ENCODE measurements at regions of chr4 and their contacts with region 1.

Region 1: DNA sequence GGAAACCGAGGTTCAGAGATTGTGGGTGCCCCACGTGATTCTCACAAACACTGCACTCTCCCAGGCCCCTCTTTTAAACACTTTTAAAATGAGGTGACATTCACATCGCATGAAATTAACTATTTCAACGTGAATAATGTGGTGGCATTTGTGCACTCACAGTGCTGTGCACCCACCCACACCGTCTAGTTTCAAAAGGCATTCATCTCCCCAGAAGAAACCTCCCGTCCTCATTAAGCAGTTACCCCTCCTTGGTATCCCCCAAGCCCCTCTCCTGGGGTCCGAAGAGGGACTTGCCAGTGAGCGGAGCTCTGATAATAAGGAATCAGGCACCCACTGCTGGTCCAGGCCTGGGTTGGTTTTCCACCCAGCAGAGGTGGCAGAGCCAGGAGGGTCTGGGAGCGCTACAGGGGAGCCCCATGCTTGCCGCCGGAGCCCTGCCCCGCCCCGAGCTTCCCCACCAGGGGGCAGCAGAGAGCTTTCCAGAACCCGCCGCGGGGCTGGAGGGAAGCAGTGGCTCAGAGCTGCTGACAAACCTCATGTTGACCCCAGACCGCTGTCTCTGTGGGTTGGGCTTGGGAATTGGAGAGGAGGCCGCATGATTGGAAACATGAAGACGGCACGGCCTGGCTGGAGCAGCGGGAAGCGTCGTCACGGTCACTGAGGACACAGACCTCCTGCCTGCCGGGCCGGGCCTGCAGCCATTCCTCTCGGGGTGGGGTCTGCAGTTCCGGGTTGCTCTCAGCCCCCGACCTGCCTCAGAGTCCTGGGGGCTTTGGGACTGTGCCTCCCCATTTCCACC is 27.5 kb upstream of the HTRA3 start:
- DNase-seq: peak; percentile 66 to 82 (median 69)
- H3K4me3 ChIP-seq: no peak overlapping the region
- H3K4me3 Mint-ChIP-seq: peak overlapping the region in 1 of 8 donors; percentile 13
- H3K27ac ChIP-seq: no peak overlapping the region
- H3K27ac Mint-ChIP-seq: peak overlapping the region in 6 of 7 donors; percentile 46 to 88 (median 81)
- H3K4me1 ChIP-seq: peaks cover 14% of the 10 kb centered on the region
- H3K4me1 Mint-ChIP-seq: peaks cover 5 to 10% (median 6%) of the 10 kb centered on the region in 4 donors
- H3K27me3 ChIP-seq: no peaks in the 10 kb centered on the region
- H3K27me3 Mint-ChIP-seq: no peaks in the 10 kb centered on the region

Region 2: DNA sequence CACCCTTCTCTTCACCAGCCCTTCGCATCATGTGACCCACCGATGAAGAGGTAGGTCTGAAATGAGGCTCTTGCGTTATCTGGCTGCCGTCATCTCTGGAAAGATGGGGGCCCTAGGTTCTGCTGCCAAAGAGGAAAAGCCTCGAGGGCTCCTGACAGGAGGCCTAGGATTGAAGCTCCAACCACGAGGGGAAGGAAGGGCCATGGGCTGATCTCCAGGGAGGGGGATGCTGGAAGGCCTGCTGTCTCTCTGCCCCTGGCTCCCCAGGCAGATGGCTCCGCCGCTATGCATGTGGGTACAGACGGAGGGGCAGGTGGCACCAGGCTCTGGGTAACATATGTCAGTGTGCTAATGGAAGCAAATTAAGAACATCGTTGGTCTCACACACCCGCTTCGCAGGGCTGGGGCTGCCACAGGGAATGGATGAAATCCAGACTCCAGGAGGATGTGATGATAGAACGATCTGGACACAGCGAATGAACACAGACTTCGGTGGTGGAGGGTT is 347.4 kb before region 1 on chr4:
- CTCF ChIA-PET with region 1: no interaction called
- POLR2A ChIA-PET with region 1: no interaction called
- intact Hi-C with region 1: no loop called
- DNase-seq: no peak
- H3K4me3 ChIP-seq: no peak overlapping the region
- H3K4me3 Mint-ChIP-seq: no peak overlapping the region
- H3K27ac ChIP-seq: no peak overlapping the region
- H3K27ac Mint-ChIP-seq: peak overlapping the region in 2 of 7 donors; percentile 24 to 64
- H3K4me1 ChIP-seq: no peaks in the 10 kb centered on the region
- H3K4me1 Mint-ChIP-seq: peaks cover 15 to 51% (median 23%) of the 10 kb centered on the region in 4 donors
- H3K27me3 ChIP-seq: no peaks in the 10 kb centered on the region
- H3K27me3 Mint-ChIP-seq: no peaks in the 10 kb centered on the region

Region 3: GRCh38 chr4:7973545-7973981 is 268.5 kb before region 1 on chr4:
- CTCF ChIA-PET with region 1: no interaction called
- POLR2A ChIA-PET with region 1: no interaction called
- intact Hi-C with region 1: no loop called
- DNase-seq: no peak
- H3K4me3 ChIP-seq: no peak overlapping the region
- H3K4me3 Mint-ChIP-seq: peak overlapping the region in 4 of 8 donors; percentile 21 to 38 (median 32)
- H3K27ac ChIP-seq: no peak overlapping the region
- H3K27ac Mint-ChIP-seq: peak overlapping the region; percentile 67 to 97 (median 88)
- H3K4me1 ChIP-seq: peaks cover 48% of the 10 kb centered on the region
- H3K4me1 Mint-ChIP-seq: peaks cover 27 to 56% (median 44%) of the 10 kb centered on the region in 4 donors
- H3K27me3 ChIP-seq: no peaks in the 10 kb centered on the region
- H3K27me3 Mint-ChIP-seq: no peaks in the 10 kb centered on the region

Region 4: GRCh38 chr4:8221476-8221875 is 20.6 kb before region 1 on chr4:
- CTCF ChIA-PET with region 1: interaction called, 10 read pairs
- POLR2A ChIA-PET with region 1: no interaction called
- intact Hi-C with region 1: no loop called
- DNase-seq: peak; percentile 71 to 80 (median 77)
- H3K4me3 ChIP-seq: no peak overlapping the region
- H3K4me3 Mint-ChIP-seq: peak overlapping the region in 7 of 8 donors; percentile 1 to 57 (median 20)
- H3K27ac ChIP-seq: peak overlapping the region; percentile 33
- H3K27ac Mint-ChIP-seq: peak overlapping the region; percentile 80 to 97 (median 92)
- H3K4me1 ChIP-seq: peaks cover 43% of the 10 kb centered on the region
- H3K4me1 Mint-ChIP-seq: peaks cover 29 to 52% (median 40%) of the 10 kb centered on the region in 4 donors
- H3K27me3 ChIP-seq: no peaks in the 10 kb centered on the region
- H3K27me3 Mint-ChIP-seq: no peaks in the 10 kb centered on the region

Region 5: GRCh38 chr4:8403173-8403753 is 161.2 kb after region 1 on chr4:
- CTCF ChIA-PET with region 1: interaction called, 8 read pairs
- POLR2A ChIA-PET with region 1: no interaction called
- intact Hi-C with region 1: loop called (anchors 2 kb)
- DNase-seq: peak in 4 of 5 donors; percentile 24 to 42 (median 27)
- H3K4me3 ChIP-seq: no peak overlapping the region
- H3K4me3 Mint-ChIP-seq: no peak overlapping the region
- H3K27ac ChIP-seq: no peak overlapping the region
- H3K27ac Mint-ChIP-seq: peak overlapping the region in 1 of 7 donors; percentile 15
- H3K4me1 ChIP-seq: no peaks in the 10 kb centered on the region
- H3K4me1 Mint-ChIP-seq: no peaks in the 10 kb centered on the region
- H3K27me3 ChIP-seq: no peaks in the 10 kb centered on the region
- H3K27me3 Mint-ChIP-seq: no peaks in the 10 kb centered on the region

Region 6: GRCh38 chr4:8917868-8918783 is 676.0 kb after region 1 on chr4:
- CTCF ChIA-PET with region 1: no interaction called
- POLR2A ChIA-PET with region 1: no interaction called
- intact Hi-C with region 1: loop called (anchors 5 kb)
- DNase-seq: peak in 4 of 5 donors; percentile 26 to 50 (median 46)
- H3K4me3 ChIP-seq: no peak overlapping the region
- H3K4me3 Mint-ChIP-seq: no peak overlapping the region
- H3K27ac ChIP-seq: no peak overlapping the region
- H3K27ac Mint-ChIP-seq: no peak overlapping the region
- H3K4me1 ChIP-seq: peaks cover 6% of the 10 kb centered on the region
- H3K4me1 Mint-ChIP-seq: peaks cover 0 to 4% (median under 1%) of the 10 kb centered on the region in 4 donors
- H3K27me3 ChIP-seq: no peaks in the 10 kb centered on the region
- H3K27me3 Mint-ChIP-seq: peaks cover 3 to 7% of the 10 kb centered on the region in 2 donors

Measured in CD4-positive, alpha-beta memory T cell (primary cell).